ENCODE measurements at regions of chr6 and their contacts with region 1.

Region 1: GRCh38 chr6:34392497-34393190 is at the start of gene NUDT3:
- DNase-seq: peak; percentile 96 to 99 (median 96)
- ATAC-seq: peak; percentile 90
- H3K4me3 ChIP-seq: peak within 1 kb of the TSS; percentile 91
- H3K27ac ChIP-seq: peak within 1 kb of the TSS; percentile 96
- H3K4me1 ChIP-seq: peaks cover 17 to 19% of the 10 kb centered on the region in 2 experiments; a peak in 4 of 5 replicates
- H3K27me3 ChIP-seq: no peaks in the 10 kb centered on the region
- CTCF ChIP-seq: peak; percentile 92 to 95 (median 93)
- EP300 ChIP-seq: peak; percentile 50
- POLR2A ChIP-seq: no peak
- RAD21 ChIP-seq: peak; percentile 86 to 89
- polyA plus RNA-seq, gene NUDT3: 5.4 to 57.7 TPM

Region 2: DNA sequence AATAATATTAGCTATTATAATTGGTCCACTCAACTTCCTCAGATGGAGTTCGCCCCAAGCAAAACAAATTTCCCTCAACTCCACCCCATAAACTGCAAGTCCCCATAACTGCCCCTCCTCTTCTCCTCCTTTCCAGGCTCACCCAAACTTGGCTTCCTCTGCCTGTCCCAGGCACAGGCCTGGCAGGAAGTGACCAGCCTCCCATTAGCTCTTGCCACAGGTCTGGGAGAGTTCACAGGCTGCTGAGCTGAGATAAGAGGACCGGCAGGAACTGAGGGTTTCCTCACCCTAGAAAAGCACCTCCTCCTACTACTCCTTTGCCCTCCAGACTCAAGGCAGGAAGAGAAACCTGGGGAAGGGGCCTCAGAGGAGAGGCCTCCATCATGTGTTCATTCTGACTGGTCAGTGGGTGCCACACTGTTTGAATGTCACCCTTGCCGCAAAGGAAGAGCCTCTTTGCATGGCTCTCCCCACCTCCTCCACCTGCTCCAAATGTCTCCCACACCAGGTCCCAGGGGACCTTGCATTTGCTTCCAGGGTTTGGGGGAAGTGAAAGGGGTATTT is 119.3 kb before region 1 on chr6:
- CTCF ChIA-PET with region 1: no interaction called
- POLR2A ChIA-PET with region 1: no interaction called
- in situ Hi-C with region 1: no loop called
- intact Hi-C with region 1: loop called (anchors 10 kb)
- DNase-seq: peak; percentile 82 to 99 (median 90)
- ATAC-seq: peak; percentile 94
- H3K4me3 ChIP-seq: no peak overlapping the region
- H3K27ac ChIP-seq: peak overlapping the region; percentile 91
- H3K4me1 ChIP-seq: peaks cover 39 to 55% of the 10 kb centered on the region in 2 experiments
- H3K27me3 ChIP-seq: no peaks in the 10 kb centered on the region
- CTCF ChIP-seq: no peak
- EP300 ChIP-seq: peak; percentile 98
- POLR2A ChIP-seq: peak; percentile 60
- RAD21 ChIP-seq: peak in 1 of 2 experiments; percentile 51; a peak in 3 of 4 replicates

Region 3: GRCh38 chr6:34324738-34325444 is 67.8 kb before region 1 on chr6:
- CTCF ChIA-PET with region 1: no interaction called
- POLR2A ChIA-PET with region 1: interaction called, 3 read pairs
- in situ Hi-C with region 1: no loop called
- intact Hi-C with region 1: loop called (anchors 2 kb)
- DNase-seq: peak in 2 of 4 experiments; percentile 54 to 87
- ATAC-seq: peak; percentile 81
- H3K4me3 ChIP-seq: no peak overlapping the region
- H3K27ac ChIP-seq: peak overlapping the region; percentile 79
- H3K4me1 ChIP-seq: peaks cover 22 to 49% of the 10 kb centered on the region in 2 experiments
- H3K27me3 ChIP-seq: no peaks in the 10 kb centered on the region
- CTCF ChIP-seq: no peak
- EP300 ChIP-seq: no peak
- POLR2A ChIP-seq: 0 out of 2 replicates have a peak, but pooled peaks have one; percentile 24
- RAD21 ChIP-seq: no peak